ENCODE measurements at regions of chr9 and their contacts with region 1.

Region 1: GRCh38 chr9:21559424-21560280 is 77.5 kb upstream of the IFNE start:
- DNase-seq: peak; percentile 73
- ATAC-seq: peak; percentile 81
- H3K4me3 Mint-ChIP-seq: peak overlapping the region; percentile 97
- H3K27ac Mint-ChIP-seq: peak overlapping the region; percentile 62
- H3K4me1 Mint-ChIP-seq: peaks cover 23% of the 10 kb centered on the region
- H3K27me3 Mint-ChIP-seq: peaks cover 11% of the 10 kb centered on the region

Region 2: GRCh38 chr9:21576331-21577189 is 16.9 kb after region 1 on chr9:
- POLR2A ChIA-PET with region 1: interaction called, 11 read pairs
- DNase-seq: no peak
- ATAC-seq: peak; percentile 35
- H3K4me3 Mint-ChIP-seq: peak overlapping the region; percentile 64
- H3K27ac Mint-ChIP-seq: peak overlapping the region; percentile 74
- H3K4me1 Mint-ChIP-seq: peaks cover 33% of the 10 kb centered on the region
- H3K27me3 Mint-ChIP-seq: no peaks in the 10 kb centered on the region

Measured in activated naive CD8-positive, alpha-beta T cell treated with anti-CD3 and anti-CD28 coated beads, Interleukin-2, amount 10 ng/mL, durations not matched to agents 7 days and 5 days (primary cell).